ENCODE measurements at regions of chr6 and their contacts with region 1.

Region 1: GRCh38 chr6:44312901-44313788 is at the start of gene AARS2:
- DNase-seq: peak; percentile 95
- ATAC-seq: peak; percentile 97
- H3K4me3 Mint-ChIP-seq: peak within 1 kb of the TSS; percentile 90
- H3K27ac Mint-ChIP-seq: peak within 1 kb of the TSS; percentile 83
- H3K4me1 Mint-ChIP-seq: peaks cover 16% of the 10 kb centered on the region
- H3K27me3 Mint-ChIP-seq: no peaks in the 10 kb centered on the region
- CTCF ChIP-seq: peak; percentile 91
- total RNA-seq, gene AARS2: 16.2 to 16.3 TPM

Region 2: GRCh38 chr6:44297063-44298038 is 15.8 kb before region 1 on chr6:
- CTCF ChIA-PET with region 1: interaction called, 36 read pairs
- POLR2A ChIA-PET with region 1: interaction called, 10 read pairs
- intact Hi-C with region 1: no loop called
- DNase-seq: peak; percentile 67
- ATAC-seq: peak; percentile 90
- H3K4me3 Mint-ChIP-seq: peak overlapping the region; percentile 53
- H3K27ac Mint-ChIP-seq: peak overlapping the region; percentile 15
- H3K4me1 Mint-ChIP-seq: peaks cover 11% of the 10 kb centered on the region
- H3K27me3 Mint-ChIP-seq: peaks cover 31% of the 10 kb centered on the region
- CTCF ChIP-seq: no peak

Region 3: DNA sequence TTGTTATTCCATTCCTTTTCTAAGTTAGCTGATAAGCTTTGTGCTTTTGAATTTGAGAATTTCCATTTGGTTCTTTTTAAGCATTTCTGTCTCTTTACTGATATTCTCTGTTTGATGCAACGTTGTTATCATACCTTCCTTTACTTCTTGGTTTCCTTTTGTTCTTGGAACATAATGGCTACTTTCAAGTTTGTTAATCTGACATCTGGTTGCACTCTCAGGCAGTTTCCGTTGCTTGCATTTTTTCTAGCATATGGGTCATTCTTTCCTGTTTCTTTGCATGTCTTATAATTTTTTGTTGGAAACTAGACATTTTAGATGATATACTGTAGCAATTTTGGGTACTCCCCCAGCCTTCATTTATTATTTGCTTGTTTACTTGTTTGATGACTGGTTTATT is 86.8 kb after region 1 on chr6:
- CTCF ChIA-PET with region 1: no interaction called
- POLR2A ChIA-PET with region 1: no interaction called
- intact Hi-C with region 1: no loop called
- DNase-seq: no peak
- ATAC-seq: no peak
- H3K4me3 Mint-ChIP-seq: no peak overlapping the region
- H3K27ac Mint-ChIP-seq: peak overlapping the region; percentile 74
- H3K4me1 Mint-ChIP-seq: peaks cover 27% of the 10 kb centered on the region
- H3K27me3 Mint-ChIP-seq: no peaks in the 10 kb centered on the region
- CTCF ChIP-seq: no peak

Region 4: DNA sequence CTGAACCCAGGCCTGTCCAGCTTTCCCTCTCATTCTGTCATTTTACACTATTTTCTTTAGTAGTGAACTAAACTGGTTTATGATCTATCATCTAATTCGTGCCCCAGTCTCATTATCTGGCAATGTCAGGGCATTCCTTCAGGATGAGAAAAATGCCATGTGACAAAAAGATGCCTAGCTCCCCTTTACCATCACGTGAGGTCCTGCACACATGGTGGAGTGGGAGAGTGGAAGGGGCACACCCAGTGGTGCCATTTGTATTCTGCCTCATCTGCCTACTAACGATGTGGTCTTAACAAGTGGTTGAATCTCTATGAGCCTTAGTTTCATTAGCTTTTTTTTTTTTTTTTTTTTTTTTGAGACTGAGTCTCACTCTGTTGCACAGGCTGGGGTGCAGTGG is 115.5 kb after region 1 on chr6:
- CTCF ChIA-PET with region 1: no interaction called
- POLR2A ChIA-PET with region 1: no interaction called
- intact Hi-C with region 1: no loop called
- DNase-seq: no peak
- ATAC-seq: no peak
- H3K4me3 Mint-ChIP-seq: no peak overlapping the region
- H3K27ac Mint-ChIP-seq: no peak overlapping the region
- H3K4me1 Mint-ChIP-seq: peaks cover 4% of the 10 kb centered on the region
- H3K27me3 Mint-ChIP-seq: no peaks in the 10 kb centered on the region
- CTCF ChIP-seq: no peak

Measured in activated CD8-positive, alpha-beta T cell treated with anti-CD3 and anti-CD28 coated beads for 36 hours (primary cell).